Activated naive CD4-positive, alpha-beta T cell treated with anti-CD3 and anti-CD28 coated beads for 36 hours (primary cell): ENCODE measurements at regions of chr13 and their contacts with region 1.

Region 1: DNA sequence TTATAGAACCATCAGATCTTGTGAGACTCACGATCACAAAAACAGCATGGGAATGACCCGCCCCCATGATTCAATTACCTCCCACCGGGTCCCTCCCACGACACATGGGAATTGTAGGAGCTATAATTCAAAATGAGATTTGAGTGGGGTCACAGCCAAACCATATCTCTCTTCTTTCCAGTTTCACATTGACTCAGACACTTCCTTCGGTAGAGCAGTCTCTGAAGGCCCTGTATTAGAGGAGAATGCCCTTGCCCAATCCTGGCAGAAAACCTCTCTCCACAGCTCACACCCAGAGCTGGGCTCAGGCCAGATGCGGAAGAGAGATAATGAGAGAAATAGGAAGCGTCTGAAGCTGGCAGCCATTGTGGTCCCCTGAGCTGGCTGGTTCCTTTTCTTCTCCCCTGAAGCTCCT is 72.4 kb upstream of the CLDN10 start:
- DNase-seq: peak; percentile 27
- H3K4me3 Mint-ChIP-seq: no peak overlapping the region
- H3K27ac Mint-ChIP-seq: no peak overlapping the region
- H3K4me1 Mint-ChIP-seq: peaks cover 10% of the 10 kb centered on the region
- H3K27me3 Mint-ChIP-seq: peaks cover 3% of the 10 kb centered on the region

Region 2: GRCh38 chr13:94674609-94675348 is 805.4 kb before region 1 on chr13:
- CTCF ChIA-PET with region 1: interaction called, 5 read pairs
- intact Hi-C with region 1: loop called (anchors 2 kb)
- DNase-seq: peak; percentile 80
- H3K4me3 Mint-ChIP-seq: no peak overlapping the region
- H3K27ac Mint-ChIP-seq: no peak overlapping the region
- H3K4me1 Mint-ChIP-seq: no peaks in the 10 kb centered on the region
- H3K27me3 Mint-ChIP-seq: peaks cover 23% of the 10 kb centered on the region

Region 3: DNA sequence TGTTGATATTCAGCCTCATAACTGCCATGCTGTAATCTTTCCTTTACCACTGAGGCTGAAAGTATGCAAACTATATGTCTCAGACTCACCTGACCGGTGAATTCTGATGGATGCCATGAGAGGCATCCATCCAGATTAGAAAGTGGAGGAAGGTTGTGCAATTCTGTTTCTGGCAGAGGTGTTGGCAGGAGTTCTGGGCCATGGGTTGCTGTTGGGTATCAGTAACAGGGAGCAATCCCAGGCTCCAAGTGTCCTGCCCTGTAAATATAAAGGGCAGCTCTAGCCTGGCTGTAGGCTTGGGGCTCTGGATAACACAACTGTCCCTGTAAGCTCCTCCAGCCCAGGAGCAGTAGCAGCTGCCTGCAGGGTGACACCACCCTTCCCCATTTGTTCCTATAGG is 101.5 kb before region 1 on chr13:
- CTCF ChIA-PET with region 1: no interaction called
- intact Hi-C with region 1: loop called (anchors 2 kb)
- DNase-seq: no peak
- H3K4me3 Mint-ChIP-seq: no peak overlapping the region
- H3K27ac Mint-ChIP-seq: no peak overlapping the region
- H3K4me1 Mint-ChIP-seq: peaks cover 5% of the 10 kb centered on the region
- H3K27me3 Mint-ChIP-seq: no peaks in the 10 kb centered on the region